PC-9 (cell line): ENCODE measurements at regions of chrX and their contacts with region 1.

Region 1: DNA sequence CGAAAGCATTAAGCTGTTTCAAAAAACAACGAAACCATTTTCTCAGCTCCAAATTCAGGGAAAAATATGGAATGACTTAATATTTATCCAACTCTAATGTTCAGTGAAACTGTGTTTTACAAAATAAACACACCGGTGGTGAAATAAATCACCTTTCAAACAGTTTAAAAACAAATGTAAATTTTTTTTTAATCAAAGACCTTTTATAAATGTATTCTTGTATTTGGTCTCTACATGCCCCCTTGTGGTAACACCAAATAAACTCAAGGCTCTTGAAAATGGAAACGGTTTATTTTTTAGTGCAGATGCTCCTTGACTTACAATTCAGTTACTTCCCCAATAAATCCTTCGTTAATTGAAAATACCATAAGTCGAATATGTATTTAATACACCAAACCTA is 45.8 kb upstream of the ITM2A start:
- DNase-seq: no peak
- H3K4me3 ChIP-seq: no peak overlapping the region; the same call in 1 of the 2 replicates
- H3K27ac ChIP-seq: no peak overlapping the region
- H3K4me1 ChIP-seq: no peaks in the 10 kb centered on the region
- H3K27me3 ChIP-seq: no peaks in the 10 kb centered on the region
- CTCF ChIP-seq: peak; percentile 55; the same call in 1 of the 2 replicates

Region 2: GRCh38 chrX:78573630-78574029 is 839.3 kb before region 1 on chrX:
- CTCF ChIA-PET with region 1: no interaction called
- POLR2A ChIA-PET with region 1: no interaction called
- intact Hi-C with region 1: loop called (anchors 5 kb)
- DNase-seq: no peak
- H3K4me3 ChIP-seq: no peak overlapping the region
- H3K27ac ChIP-seq: no peak overlapping the region
- H3K4me1 ChIP-seq: no peaks in the 10 kb centered on the region
- H3K27me3 ChIP-seq: no peaks in the 10 kb centered on the region
- CTCF ChIP-seq: no peak